Activated B cell treated with CpG ODN at 0.5 μM for 24 hours (primary cell): ENCODE measurements at regions of chr3 and their contacts with region 1.

Region 1: GRCh38 chr3:194134757-194135528 is 1.0 kb upstream of the HES1 start:
- DNase-seq: peak; percentile 82
- ATAC-seq: peak; percentile 37
- H3K4me3 Mint-ChIP-seq: peak overlapping the region; percentile 92
- H3K27ac Mint-ChIP-seq: peak overlapping the region; percentile 96
- H3K4me1 Mint-ChIP-seq: peaks cover 78% of the 10 kb centered on the region
- H3K27me3 Mint-ChIP-seq: peaks cover 1% of the 10 kb centered on the region
- CTCF ChIP-seq: no peak

Region 2: DNA sequence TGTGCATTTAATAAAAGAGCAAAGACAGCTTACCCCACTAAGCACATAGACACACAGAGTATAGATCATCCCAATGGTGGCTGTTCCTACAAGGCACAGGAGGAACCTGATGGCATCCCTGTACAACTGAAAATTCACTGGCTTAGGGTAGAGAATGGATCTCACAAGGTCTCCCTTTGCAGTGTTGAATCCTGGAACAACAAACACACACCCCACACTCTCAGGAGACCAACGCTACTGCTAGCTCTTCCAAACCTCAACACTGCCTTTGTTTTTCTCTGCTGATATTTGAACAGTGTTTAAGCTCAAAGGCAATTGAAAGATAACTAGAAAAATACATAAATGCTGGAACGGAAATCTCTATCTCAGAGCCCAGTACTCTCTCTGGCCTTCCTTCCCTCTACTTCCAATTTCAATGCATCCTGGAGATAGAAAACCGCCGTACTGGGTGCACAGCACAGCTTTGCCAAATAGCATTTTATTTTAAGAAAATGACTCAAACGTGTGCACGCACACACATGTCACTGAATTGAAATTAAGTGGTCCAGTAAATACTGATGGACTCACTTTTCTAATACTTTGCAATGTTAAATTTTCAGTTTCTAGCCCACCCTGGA is 668.8 kb before region 1 on chr3:
- CTCF ChIA-PET with region 1: no interaction called
- POLR2A ChIA-PET with region 1: no interaction called
- intact Hi-C with region 1: loop called (anchors 5 kb)
- DNase-seq: no peak
- ATAC-seq: no peak
- H3K4me3 Mint-ChIP-seq: no peak overlapping the region
- H3K27ac Mint-ChIP-seq: no peak overlapping the region
- H3K4me1 Mint-ChIP-seq: no peaks in the 10 kb centered on the region
- H3K27me3 Mint-ChIP-seq: peaks cover 1% of the 10 kb centered on the region
- CTCF ChIP-seq: no peak

Region 3: GRCh38 chr3:193780810-193781472 is 354.0 kb before region 1 on chr3:
- CTCF ChIA-PET with region 1: interaction called, 62 read pairs
- POLR2A ChIA-PET with region 1: interaction called, 9 read pairs
- intact Hi-C with region 1: loop called (anchors 1 kb)
- DNase-seq: no peak
- ATAC-seq: peak; percentile 42
- H3K4me3 Mint-ChIP-seq: no peak overlapping the region
- H3K27ac Mint-ChIP-seq: no peak overlapping the region
- H3K4me1 Mint-ChIP-seq: peaks cover 13% of the 10 kb centered on the region
- H3K27me3 Mint-ChIP-seq: peaks cover 34% of the 10 kb centered on the region
- CTCF ChIP-seq: no peak

Region 4: DNA sequence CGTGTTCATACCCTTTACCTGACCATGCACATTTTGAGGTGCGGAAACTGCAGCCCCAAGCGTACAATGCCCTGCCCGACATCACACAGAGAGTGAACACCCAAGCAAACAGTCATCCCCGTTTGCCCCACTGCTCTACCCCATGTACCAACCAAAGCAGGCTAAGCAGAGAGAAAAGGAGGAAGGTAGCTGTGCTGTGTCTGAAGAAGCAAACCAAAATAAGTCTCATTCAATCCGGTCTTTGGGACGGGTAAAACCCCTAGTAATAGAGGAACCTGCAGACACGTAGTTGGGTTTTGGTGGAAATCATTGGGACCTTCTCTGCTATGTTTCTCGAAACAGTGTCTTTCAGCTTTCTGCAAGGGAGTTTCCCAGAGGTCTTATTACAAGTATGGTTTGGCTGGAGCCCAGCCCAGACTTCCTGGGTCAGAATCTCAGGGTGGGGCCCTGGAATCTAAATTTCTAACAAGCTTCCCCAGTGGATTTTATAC is 163.6 kb before region 1 on chr3:
- CTCF ChIA-PET with region 1: interaction called, 44 read pairs
- POLR2A ChIA-PET with region 1: interaction called, 16 read pairs
- intact Hi-C with region 1: loop called (anchors 1 kb)
- DNase-seq: peak; percentile 37
- ATAC-seq: peak; percentile 93
- H3K4me3 Mint-ChIP-seq: peak overlapping the region; percentile 77
- H3K27ac Mint-ChIP-seq: peak overlapping the region; percentile 91
- H3K4me1 Mint-ChIP-seq: peaks cover 29% of the 10 kb centered on the region
- H3K27me3 Mint-ChIP-seq: peaks cover 10% of the 10 kb centered on the region
- CTCF ChIP-seq: no peak

Region 5: GRCh38 chr3:194089357-194090177 is 45.4 kb before region 1 on chr3:
- CTCF ChIA-PET with region 1: interaction called, 3 read pairs
- POLR2A ChIA-PET with region 1: interaction called, 9 read pairs
- intact Hi-C with region 1: loop called (anchors 1 kb)
- DNase-seq: peak; percentile 41
- ATAC-seq: peak; percentile 86
- H3K4me3 Mint-ChIP-seq: peak overlapping the region; percentile 9
- H3K27ac Mint-ChIP-seq: peak overlapping the region; percentile 71
- H3K4me1 Mint-ChIP-seq: peaks cover 43% of the 10 kb centered on the region
- H3K27me3 Mint-ChIP-seq: no peaks in the 10 kb centered on the region
- CTCF ChIP-seq: no peak

Region 6: GRCh38 chr3:194306109-194306686 is 171.3 kb after region 1 on chr3:
- CTCF ChIA-PET with region 1: interaction called, 3 read pairs
- POLR2A ChIA-PET with region 1: interaction called, 21 read pairs
- intact Hi-C with region 1: loop called (anchors 1 kb)
- DNase-seq: peak; percentile 51
- ATAC-seq: peak; percentile 61
- H3K4me3 Mint-ChIP-seq: peak overlapping the region; percentile 70
- H3K27ac Mint-ChIP-seq: peak overlapping the region; percentile 84
- H3K4me1 Mint-ChIP-seq: no peaks in the 10 kb centered on the region
- H3K27me3 Mint-ChIP-seq: no peaks in the 10 kb centered on the region
- CTCF ChIP-seq: no peak

Region 7: GRCh38 chr3:195909644-195910508 is 1774.9 kb after region 1 on chr3:
- CTCF ChIA-PET with region 1: no interaction called
- POLR2A ChIA-PET with region 1: no interaction called
- intact Hi-C with region 1: loop called (anchors 5 kb)
- DNase-seq: peak; percentile 88
- ATAC-seq: peak; percentile 65
- H3K4me3 Mint-ChIP-seq: peak overlapping the region; percentile 78
- H3K27ac Mint-ChIP-seq: peak overlapping the region; percentile 78
- H3K4me1 Mint-ChIP-seq: peaks cover 44% of the 10 kb centered on the region
- H3K27me3 Mint-ChIP-seq: no peaks in the 10 kb centered on the region
- CTCF ChIP-seq: no peak